ENCODE measurements at regions of chr17 and their contacts with region 1.

Region 1: DNA sequence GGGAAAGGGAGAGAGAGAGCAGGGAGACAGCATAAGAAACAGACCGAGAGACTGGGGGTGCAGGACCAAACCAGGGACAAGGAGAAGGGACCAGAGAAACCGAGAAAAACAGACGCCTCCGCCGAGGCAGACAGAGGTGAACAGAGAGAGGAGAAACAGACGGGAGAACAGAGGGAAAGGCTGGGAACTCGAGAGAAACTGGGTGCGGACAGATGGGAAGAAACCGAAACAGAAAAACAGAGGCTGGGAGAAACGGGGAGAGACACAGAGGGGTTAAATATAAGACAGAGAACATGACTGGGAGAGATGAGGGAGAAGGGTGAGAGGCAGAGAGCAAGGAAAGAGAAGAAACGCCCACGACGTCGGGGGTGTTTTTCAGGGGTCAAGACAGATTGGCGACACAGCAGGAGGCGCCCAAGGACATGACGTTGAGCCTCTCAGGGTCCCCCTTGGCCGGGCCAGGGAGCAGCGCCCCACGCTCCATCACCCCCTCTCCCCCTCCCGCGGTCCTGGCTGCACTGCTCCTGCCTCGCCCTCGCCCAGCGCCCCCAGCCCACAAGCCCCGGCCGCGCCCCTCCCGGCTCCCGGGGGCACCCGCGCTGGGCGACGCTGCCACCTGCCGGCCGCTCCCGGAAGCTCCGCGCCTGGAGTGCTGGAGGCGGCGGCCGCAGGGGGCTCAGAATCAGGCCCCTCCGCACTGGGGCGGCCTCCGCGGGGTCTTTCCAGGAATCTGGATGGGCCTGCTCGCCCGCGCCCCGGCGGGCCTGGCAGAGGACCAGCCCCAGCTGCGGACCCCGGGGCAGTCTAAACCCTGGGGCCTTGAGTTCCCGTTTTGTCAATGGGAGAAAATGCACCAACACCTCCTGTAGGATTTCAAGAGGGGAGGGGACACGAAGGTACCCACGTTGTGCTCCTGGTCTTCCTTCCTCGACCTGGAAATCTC is 1.3 kb upstream of the TMEM92 start:
- DNase-seq: peak; percentile 48
- H3K4me3 ChIP-seq: peak overlapping the region; percentile 41
- H3K27ac ChIP-seq: no peak overlapping the region
- H3K4me1 ChIP-seq: no peaks in the 10 kb centered on the region
- CTCF ChIP-seq: peak; percentile 90

Region 2: DNA sequence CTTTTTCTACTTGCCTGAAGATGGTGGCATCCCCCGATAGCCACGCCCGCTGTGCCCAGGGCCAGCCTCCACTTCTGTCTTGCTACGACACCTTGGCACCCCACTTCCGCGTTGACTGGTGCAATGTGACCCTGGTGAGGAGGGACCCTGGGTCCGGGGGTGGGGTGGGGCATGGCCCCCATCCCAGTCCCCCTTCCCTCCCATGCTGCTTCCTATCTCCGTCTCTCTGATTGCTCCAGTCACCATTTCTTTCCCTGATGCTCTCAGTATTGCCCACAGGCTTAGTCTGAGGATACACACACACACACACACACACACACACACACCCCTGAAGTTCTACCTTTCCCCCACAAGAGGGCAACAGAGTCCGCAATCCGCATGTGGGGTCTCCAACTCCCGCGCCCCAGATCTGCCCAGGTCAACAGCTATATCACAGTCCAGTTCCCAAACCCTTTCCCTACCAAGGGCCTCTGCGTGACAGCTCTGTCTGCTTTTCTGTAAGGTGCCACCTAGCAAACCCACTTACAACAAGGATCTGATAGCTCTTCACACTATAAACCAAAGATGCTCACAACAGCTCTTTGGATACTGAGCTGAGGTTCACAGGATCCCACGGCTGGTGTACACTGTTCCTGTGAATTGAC is 103.7 kb before region 1 on chr17:
- CTCF ChIA-PET with region 1: no interaction called
- POLR2A ChIA-PET with region 1: no interaction called
- intact Hi-C with region 1: loop called (anchors 1 kb)
- DNase-seq: peak; percentile 84
- H3K4me3 ChIP-seq: peak overlapping the region; percentile 64
- H3K27ac ChIP-seq: no peak overlapping the region
- H3K4me1 ChIP-seq: peaks cover 17% of the 10 kb centered on the region
- CTCF ChIP-seq: peak; percentile 92

Region 3: GRCh38 chr17:50210240-50211225 is 62.4 kb before region 1 on chr17:
- CTCF ChIA-PET with region 1: no interaction called
- POLR2A ChIA-PET with region 1: no interaction called
- intact Hi-C with region 1: no loop called
- DNase-seq: no peak
- H3K4me3 ChIP-seq: no peak overlapping the region
- H3K27ac ChIP-seq: no peak overlapping the region
- H3K4me1 ChIP-seq: no peaks in the 10 kb centered on the region
- CTCF ChIP-seq: no peak

Region 4: DNA sequence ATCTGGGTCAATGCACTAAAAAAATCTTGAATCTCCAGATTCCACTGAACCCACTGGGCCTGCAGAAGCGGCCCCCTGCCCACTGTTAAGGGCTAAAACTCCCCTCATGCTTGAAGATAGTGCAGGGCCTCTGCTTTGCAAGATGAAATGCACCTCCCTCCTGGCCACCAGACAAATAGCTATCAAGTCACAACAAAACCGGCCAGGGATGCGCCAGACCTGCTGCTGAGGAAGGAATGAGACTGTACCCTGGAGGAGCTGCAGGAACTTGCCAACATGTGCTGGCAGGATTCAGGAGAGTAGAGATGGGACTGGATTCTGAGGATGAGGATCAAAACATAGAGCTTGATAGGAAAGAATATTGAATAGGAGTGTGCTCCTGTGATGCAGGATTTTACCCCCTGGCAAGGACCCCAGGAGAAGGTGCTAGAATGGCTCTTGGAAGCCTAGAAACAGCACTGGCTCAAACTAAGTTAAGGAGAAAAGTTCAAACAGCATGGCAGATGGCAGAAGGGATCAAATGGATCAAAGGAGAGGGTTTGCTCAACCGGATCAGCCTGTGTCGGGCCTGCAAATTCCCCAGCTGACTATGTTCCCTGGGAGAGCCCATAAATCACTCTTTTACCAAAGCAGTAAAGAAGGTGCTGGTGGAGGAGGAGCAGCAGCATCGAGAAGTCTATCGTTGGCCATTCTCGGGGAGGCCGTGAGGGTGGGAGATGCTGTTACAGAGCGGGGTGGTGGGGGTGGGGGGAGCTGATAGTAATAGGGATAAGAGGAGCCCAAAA is 45.7 kb after region 1 on chr17:
- CTCF ChIA-PET with region 1: no interaction called
- POLR2A ChIA-PET with region 1: no interaction called
- intact Hi-C with region 1: no loop called
- DNase-seq: no peak
- H3K4me3 ChIP-seq: no peak overlapping the region
- H3K27ac ChIP-seq: no peak overlapping the region
- H3K4me1 ChIP-seq: no peaks in the 10 kb centered on the region
- CTCF ChIP-seq: no peak